Heart left ventricle (tissue), 16 donors: ENCODE measurements at regions of chr5 and their contacts with region 1.

Region 1: GRCh38 chr5:57499262-57500050 is 16.8 kb upstream of the ACTBL2 start:
- DNase-seq: peak in 1 of 5 donors; percentile 31
- ATAC-seq: peak in 2 of 4 donors; percentile 59 to 76
- H3K4me3 ChIP-seq: peak overlapping the region in 9 of 12 donors; percentile 4 to 42 (median 26)
- H3K27ac ChIP-seq: peak overlapping the region in 6 of 12 donors; percentile 1 to 48 (median 17)
- H3K4me1 ChIP-seq: peaks cover 0 to 56% (median 23%) of the 10 kb centered on the region in 12 donors
- H3K27me3 ChIP-seq: no peaks in the 10 kb centered on the region
- CTCF ChIP-seq: peak; percentile 59 to 85 (median 78)
- POLR2A ChIP-seq: no peak

Region 2: GRCh38 chr5:57650360-57651069 is 151.1 kb after region 1 on chr5:
- intact Hi-C with region 1: loop called in 1 of 10 experiments (anchors 10 kb)
- DNase-seq: no peak
- ATAC-seq: peak in 2 of 4 donors; percentile 50 to 61
- H3K4me3 ChIP-seq: no peak overlapping the region
- H3K27ac ChIP-seq: no peak overlapping the region
- H3K4me1 ChIP-seq: peaks cover 0 to 16% (median 0%) of the 10 kb centered on the region in 12 donors
- H3K27me3 ChIP-seq: no peaks in the 10 kb centered on the region
- CTCF ChIP-seq: peak; percentile 33 to 61 (median 51)
- POLR2A ChIP-seq: no peak

Region 3: DNA sequence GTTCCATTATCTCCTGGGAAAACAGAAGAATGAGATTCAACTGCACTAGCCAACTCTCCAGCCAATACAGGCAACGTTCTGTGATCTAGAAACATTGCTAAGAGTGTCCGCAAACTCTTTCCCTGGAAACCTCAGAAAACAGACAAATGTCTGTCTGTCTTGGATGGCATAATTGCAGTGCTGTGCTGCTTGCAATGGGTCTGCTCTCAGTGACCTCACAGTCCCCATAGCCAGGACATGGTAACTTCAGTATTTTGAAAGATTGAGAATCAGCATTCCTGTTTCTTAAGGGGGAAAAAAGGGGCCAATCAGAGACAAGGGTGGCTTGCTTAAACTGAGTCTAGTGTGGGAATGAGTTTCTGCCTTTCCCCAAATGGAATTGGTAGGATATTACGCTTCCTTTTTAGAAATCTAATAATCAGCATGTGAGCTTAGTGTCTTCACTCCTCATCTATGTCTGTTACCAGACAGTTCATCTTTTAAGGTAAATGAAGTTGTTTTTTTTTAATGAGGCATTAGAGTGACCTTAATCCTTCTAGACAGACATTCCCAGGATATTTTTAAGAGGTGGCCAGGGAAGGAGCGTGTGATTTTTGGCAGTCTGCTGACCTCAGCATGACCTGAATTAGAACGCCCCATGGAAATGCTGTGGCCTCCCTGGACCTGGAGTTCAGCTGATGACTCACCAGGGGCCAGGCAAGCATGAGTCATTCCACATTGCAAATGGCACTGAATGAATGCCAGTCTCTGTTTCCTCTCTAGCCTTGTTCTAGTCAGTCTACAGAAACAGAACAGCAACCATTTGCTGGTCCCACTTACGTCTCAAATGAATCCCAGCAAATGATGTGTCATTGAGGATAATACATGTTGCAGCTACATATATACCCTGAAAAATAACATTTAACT is 193.4 kb after region 1 on chr5:
- intact Hi-C with region 1: loop called in 2 of 10 experiments (anchors 5 to 10 kb)
- DNase-seq: peak; percentile 58 to 87 (median 69)
- ATAC-seq: peak; percentile 71 to 94 (median 88)
- H3K4me3 ChIP-seq: no peak overlapping the region
- H3K27ac ChIP-seq: peak overlapping the region in 11 of 12 donors; percentile 24 to 86 (median 62)
- H3K4me1 ChIP-seq: peaks cover under 1 to 55% (median 36%) of the 10 kb centered on the region in 12 donors
- H3K27me3 ChIP-seq: no peaks in the 10 kb centered on the region
- CTCF ChIP-seq: no peak
- POLR2A ChIP-seq: no peak

Region 4: DNA sequence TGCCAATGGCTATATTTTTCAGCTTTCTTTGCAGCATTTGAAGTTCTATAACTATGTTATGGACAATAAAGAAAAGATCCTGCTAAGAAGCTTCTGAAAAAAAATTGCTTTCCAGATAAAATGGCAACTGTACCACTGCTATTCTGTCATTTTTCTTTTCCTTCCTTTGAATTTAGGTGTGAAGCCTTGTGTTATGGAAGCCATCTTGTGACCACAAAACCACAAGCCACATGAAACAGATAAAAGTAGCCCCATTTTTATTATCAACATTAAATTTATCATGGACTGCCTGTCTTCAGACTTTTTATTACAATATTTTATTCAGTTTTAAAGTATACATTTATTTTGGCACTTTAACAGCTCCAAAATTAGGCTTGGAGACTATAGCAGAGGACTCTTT is 273.1 kb after region 1 on chr5:
- intact Hi-C with region 1: loop called in 7 of 10 experiments (anchors 5 to 10 kb)
- DNase-seq: no peak
- ATAC-seq: no peak
- H3K4me3 ChIP-seq: no peak overlapping the region
- H3K27ac ChIP-seq: no peak overlapping the region
- H3K4me1 ChIP-seq: peaks cover 0 to 8% (median 0%) of the 10 kb centered on the region in 12 donors
- H3K27me3 ChIP-seq: no peaks in the 10 kb centered on the region
- CTCF ChIP-seq: no peak
- POLR2A ChIP-seq: no peak

Region 5: GRCh38 chr5:57862457-57862911 is 363.0 kb after region 1 on chr5:
- intact Hi-C with region 1: no loop called
- DNase-seq: peak in 2 of 5 donors; percentile 27 to 36
- ATAC-seq: peak; percentile 91 to 96 (median 94)
- H3K4me3 ChIP-seq: no peak overlapping the region
- H3K27ac ChIP-seq: peak overlapping the region in 8 of 12 donors; percentile 1 to 51 (median 40)
- H3K4me1 ChIP-seq: peaks cover 0 to 19% (median 3%) of the 10 kb centered on the region in 12 donors
- H3K27me3 ChIP-seq: no peaks in the 10 kb centered on the region
- CTCF ChIP-seq: no peak
- POLR2A ChIP-seq: no peak

Region 6: DNA sequence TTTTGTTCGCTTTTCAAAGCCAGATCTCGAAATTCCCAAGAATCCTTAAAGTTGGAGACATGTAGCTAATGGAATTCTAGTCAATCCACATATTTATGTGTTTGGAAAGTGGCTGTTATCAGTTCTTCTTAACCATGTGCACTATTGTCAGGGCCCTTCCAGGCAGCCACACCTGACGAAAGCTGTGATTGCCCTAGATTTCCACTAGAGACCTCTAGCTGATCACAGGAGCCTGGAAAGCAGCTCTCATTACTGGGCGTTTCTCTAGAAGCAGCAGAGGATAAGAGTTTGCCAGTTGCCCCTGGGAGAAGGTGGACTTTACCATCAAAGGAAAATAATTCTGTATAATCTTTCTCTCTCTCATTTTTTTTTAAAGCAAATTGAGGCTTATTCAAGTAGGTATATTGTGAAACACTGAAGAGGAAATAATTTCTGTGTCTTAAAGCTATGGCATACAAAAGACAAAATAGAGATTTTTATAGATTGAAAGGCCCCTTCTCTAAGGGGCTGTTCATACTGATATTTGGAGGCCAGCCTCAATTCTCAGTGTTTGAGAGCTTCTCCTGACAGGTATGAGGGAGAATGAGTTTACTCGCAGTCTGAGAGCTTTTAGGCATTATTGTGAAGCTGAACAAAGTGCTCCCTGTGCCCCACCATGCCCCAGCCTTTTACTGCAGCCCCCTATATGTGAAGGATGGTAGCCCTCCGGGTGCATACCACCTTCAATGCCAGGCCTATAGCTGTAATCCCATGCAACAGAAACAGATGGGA is 388.6 kb after region 1 on chr5:
- intact Hi-C with region 1: loop called in 9 of 10 experiments (anchors 2 to 10 kb)
- DNase-seq: peak in 4 of 5 donors; percentile 47 to 64 (median 60)
- ATAC-seq: peak; percentile 76 to 96 (median 93)
- H3K4me3 ChIP-seq: no peak overlapping the region
- H3K27ac ChIP-seq: peak overlapping the region in 2 of 12 donors; percentile 1 to 32
- H3K4me1 ChIP-seq: peaks cover 0 to 19% (median 6%) of the 10 kb centered on the region in 12 donors
- H3K27me3 ChIP-seq: no peaks in the 10 kb centered on the region
- CTCF ChIP-seq: peak; percentile 39 to 82 (median 66)
- POLR2A ChIP-seq: no peak